ENCODE measurements at regions of chr14 and their contacts with region 1.

Region 1: GRCh38 chr14:69673578-69674305 is 62.3 kb downstream of the SUSD6 start:
- DNase-seq: no peak
- ATAC-seq: peak; percentile 24
- H3K4me3 Mint-ChIP-seq: peak overlapping the region; percentile 55
- H3K27ac Mint-ChIP-seq: peak overlapping the region; percentile 83
- H3K4me1 Mint-ChIP-seq: peaks cover 91% of the 10 kb centered on the region
- H3K27me3 Mint-ChIP-seq: no peaks in the 10 kb centered on the region

Region 2: GRCh38 chr14:69637503-69638030 is 36.2 kb before region 1 on chr14:
- CTCF ChIA-PET with region 1: interaction called, 11 read pairs
- DNase-seq: no peak
- ATAC-seq: peak; percentile 29
- H3K4me3 Mint-ChIP-seq: peak overlapping the region; percentile 60
- H3K27ac Mint-ChIP-seq: peak overlapping the region; percentile 93
- H3K4me1 Mint-ChIP-seq: peaks cover 81% of the 10 kb centered on the region
- H3K27me3 Mint-ChIP-seq: no peaks in the 10 kb centered on the region